H1 (cell line): ENCODE measurements at regions of chr11 and their contacts with region 1.

Region 1: DNA sequence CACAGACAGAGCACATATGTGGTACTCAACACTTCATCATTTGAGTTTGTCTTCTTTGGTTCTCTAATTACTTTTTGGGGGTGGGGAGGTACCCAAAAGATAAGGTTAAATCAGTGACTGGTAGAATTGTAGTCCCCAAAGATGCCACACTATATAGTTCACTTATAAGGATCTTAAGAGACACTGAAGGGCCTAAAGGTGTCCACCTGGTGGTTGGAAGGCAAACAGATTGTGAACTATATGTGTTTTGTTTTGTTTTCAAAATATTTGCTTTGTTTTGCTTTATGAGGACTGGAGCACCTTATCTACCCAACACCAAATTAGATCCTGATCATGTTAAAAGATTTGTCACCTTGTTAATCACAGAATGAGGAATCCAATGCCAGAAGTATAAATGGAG is 136.1 kb downstream of the DCDC1 start:
- DNase-seq: no peak
- H3K4me3 ChIP-seq: no peak overlapping the region
- H3K27ac ChIP-seq: no peak overlapping the region
- H3K4me1 ChIP-seq: peaks cover 0 to 5% (median 2%) of the 10 kb centered on the region in 4 experiments; a peak in 2 of 7 replicates
- H3K27me3 ChIP-seq: no peaks in the 10 kb centered on the region
- CTCF ChIP-seq: peak in 2 of 3 experiments; percentile 33 to 60; a peak in 2 of 4 replicates
- EP300 ChIP-seq: no peak
- POLR2A ChIP-seq: no peak
- RAD21 ChIP-seq: peak; percentile 39 to 52

Region 2: GRCh38 chr11:31107062-31107461 is 126.4 kb before region 1 on chr11:
- CTCF ChIA-PET with region 1: interaction called, 80 read pairs
- POLR2A ChIA-PET with region 1: no interaction called
- DNase-seq: peak; percentile 36 to 88
- H3K4me3 ChIP-seq: no peak overlapping the region
- H3K27ac ChIP-seq: no peak overlapping the region
- H3K4me1 ChIP-seq: peaks cover 0 to 5% (median 1%) of the 10 kb centered on the region in 4 experiments; a peak in 2 of 7 replicates
- H3K27me3 ChIP-seq: no peaks in the 10 kb centered on the region
- CTCF ChIP-seq: peak; percentile 50 to 85 (median 84)
- EP300 ChIP-seq: no peak
- POLR2A ChIP-seq: no peak
- RAD21 ChIP-seq: peak; percentile 98 to 99

Region 3: GRCh38 chr11:31114442-31114841 is 119.0 kb before region 1 on chr11:
- CTCF ChIA-PET with region 1: interaction called, 35 read pairs
- POLR2A ChIA-PET with region 1: no interaction called
- DNase-seq: no peak
- H3K4me3 ChIP-seq: no peak overlapping the region
- H3K27ac ChIP-seq: no peak overlapping the region
- H3K4me1 ChIP-seq: peaks cover 0 to 4% (median 1%) of the 10 kb centered on the region in 4 experiments; a peak in 2 of 7 replicates
- H3K27me3 ChIP-seq: no peaks in the 10 kb centered on the region
- CTCF ChIP-seq: no peak
- EP300 ChIP-seq: no peak
- POLR2A ChIP-seq: no peak
- RAD21 ChIP-seq: no peak

Region 4: GRCh38 chr11:31127290-31127689 is 106.1 kb before region 1 on chr11:
- CTCF ChIA-PET with region 1: interaction called, 10 read pairs
- POLR2A ChIA-PET with region 1: no interaction called
- DNase-seq: no peak
- H3K4me3 ChIP-seq: no peak overlapping the region
- H3K27ac ChIP-seq: no peak overlapping the region
- H3K4me1 ChIP-seq: no peaks in the 10 kb centered on the region; a peak in 1 of 7 replicates
- H3K27me3 ChIP-seq: no peaks in the 10 kb centered on the region
- CTCF ChIP-seq: no peak
- EP300 ChIP-seq: no peak
- POLR2A ChIP-seq: no peak
- RAD21 ChIP-seq: no peak

Region 5: GRCh38 chr11:31325160-31325559 is 91.7 kb after region 1 on chr11:
- CTCF ChIA-PET with region 1: no interaction called
- POLR2A ChIA-PET with region 1: no interaction called
- DNase-seq: no peak
- H3K4me3 ChIP-seq: no peak overlapping the region
- H3K27ac ChIP-seq: no peak overlapping the region
- H3K4me1 ChIP-seq: no peaks in the 10 kb centered on the region
- H3K27me3 ChIP-seq: no peaks in the 10 kb centered on the region
- CTCF ChIP-seq: no peak
- EP300 ChIP-seq: no peak
- POLR2A ChIP-seq: no peak
- RAD21 ChIP-seq: no peak